Dendritic cell treated with granulocyte-macrophage colony-stimulating factor and Interleukin-4, amounts not matched to agents 40 ng/mL and 50 ng/mL, for 4 days (primary cell): ENCODE measurements at regions of chr20 and their contacts with region 1.

Region 1: GRCh38 chr20:24981790-24982189 is 10.8 kb downstream of the APMAP start:
- H3K4me3 Mint-ChIP-seq: peak overlapping the region; percentile 13
- H3K27ac Mint-ChIP-seq: peak overlapping the region; percentile 85
- H3K4me1 Mint-ChIP-seq: peaks cover 81% of the 10 kb centered on the region
- H3K27me3 Mint-ChIP-seq: no peaks in the 10 kb centered on the region

Region 2: GRCh38 chr20:25407311-25408169 is 425.8 kb after region 1 on chr20 and contains the start of gene GINS1:
- intact Hi-C with region 1: loop called (anchors 2 kb)
- H3K4me3 Mint-ChIP-seq: peak within 1 kb of the TSS; percentile 91
- H3K27ac Mint-ChIP-seq: peak within 1 kb of the TSS; percentile 86
- H3K4me1 Mint-ChIP-seq: peaks cover 14% of the 10 kb centered on the region
- H3K27me3 Mint-ChIP-seq: no peaks in the 10 kb centered on the region